ENCODE measurements at regions of chrX and their contacts with region 1.

Region 1: DNA sequence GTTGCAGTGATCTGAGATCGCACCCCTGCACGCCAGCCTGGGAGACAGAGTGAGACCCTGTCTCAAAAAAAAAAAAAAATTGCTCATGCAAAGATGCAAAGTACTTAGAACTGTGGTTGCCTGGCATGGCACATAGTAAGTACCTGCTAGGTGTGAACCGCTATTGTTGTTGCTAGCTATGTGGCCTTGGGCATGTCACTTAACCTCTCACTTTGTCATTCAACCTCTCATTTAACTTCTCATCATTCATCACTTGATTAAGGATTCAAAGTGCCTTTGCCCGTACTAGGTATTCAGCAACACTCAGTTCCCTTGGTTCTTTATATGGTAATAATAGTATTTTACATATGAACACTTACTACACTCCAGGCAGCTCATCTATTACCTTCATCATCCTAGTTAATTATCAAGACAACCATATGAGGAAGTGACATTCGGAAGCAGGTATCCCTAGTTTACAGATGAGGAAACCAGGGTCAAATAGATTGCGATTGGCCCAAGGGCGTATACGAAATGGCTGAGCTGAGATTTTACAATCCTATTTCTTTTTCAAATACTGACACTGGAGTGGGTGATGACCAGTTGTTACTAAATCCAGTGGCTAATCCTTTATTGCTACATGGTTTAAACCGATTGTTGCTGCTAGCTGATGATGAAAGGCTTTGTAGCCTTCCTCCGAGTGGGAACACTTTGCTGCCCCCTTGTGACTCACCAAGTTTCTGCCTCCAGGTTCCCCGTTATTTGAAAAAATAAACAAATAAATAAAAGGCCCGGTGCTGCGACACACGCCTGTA is 28.8 kb upstream of the SOWAHD start:
- DNase-seq: peak; percentile 68
- H3K4me3 Mint-ChIP-seq: no peak overlapping the region
- H3K27ac Mint-ChIP-seq: no peak overlapping the region
- H3K4me1 Mint-ChIP-seq: peaks cover 5% of the 10 kb centered on the region
- H3K27me3 Mint-ChIP-seq: no peaks in the 10 kb centered on the region

Region 2: GRCh38 chrX:119698845-119699244 is 30.8 kb before region 1 on chrX:
- CTCF ChIA-PET with region 1: interaction called, 12 read pairs
- POLR2A ChIA-PET with region 1: no interaction called
- intact Hi-C with region 1: loop called (anchors 5 kb)
- DNase-seq: no peak
- H3K4me3 Mint-ChIP-seq: no peak overlapping the region
- H3K27ac Mint-ChIP-seq: no peak overlapping the region
- H3K4me1 Mint-ChIP-seq: peaks cover 6% of the 10 kb centered on the region
- H3K27me3 Mint-ChIP-seq: no peaks in the 10 kb centered on the region

Measured in activated CD4-positive, alpha-beta memory T cell treated with anti-CD3 and anti-CD28 coated beads for 36 hours (primary cell).